ENCODE measurements at regions of chr11 and their contacts with region 1.

Region 1: GRCh38 chr11:27472398-27473016 is at the start of gene LGR4:
- DNase-seq: peak; percentile 90
- ATAC-seq: peak; percentile 95
- H3K4me3 ChIP-seq: peak within 1 kb of the TSS; percentile 53
- H3K27ac ChIP-seq: peak within 1 kb of the TSS; percentile 15; the same call in 1 of the 2 replicates
- H3K4me1 ChIP-seq: peaks cover 7% of the 10 kb centered on the region
- H3K27me3 ChIP-seq: no peaks in the 10 kb centered on the region
- CTCF ChIP-seq: no peak
- POLR2A ChIP-seq: no peak
- RAD21 ChIP-seq: no peak
- total RNA-seq, gene LGR4: 6.8 and 8.1 TPM in 2 replicates

Region 2: GRCh38 chr11:27183672-27184457 is 288.6 kb before region 1 on chr11:
- CTCF ChIA-PET with region 1: no interaction called
- POLR2A ChIA-PET with region 1: interaction called, 10 read pairs
- dilution Hi-C with region 1: loop called (anchors 25 kb)
- in situ Hi-C with region 1: loop called (anchors 5 kb)
- intact Hi-C with region 1: no loop called
- DNase-seq: peak; percentile 72
- ATAC-seq: peak; percentile 56; the same call in 1 of the 2 replicates
- H3K4me3 ChIP-seq: no peak overlapping the region
- H3K27ac ChIP-seq: no peak overlapping the region
- H3K4me1 ChIP-seq: no peaks in the 10 kb centered on the region; the same call in 1 of the 2 replicates
- H3K27me3 ChIP-seq: peaks cover 27% of the 10 kb centered on the region
- CTCF ChIP-seq: peak; percentile 92
- POLR2A ChIP-seq: no peak
- RAD21 ChIP-seq: peak; percentile 96

Region 3: GRCh38 chr11:27362749-27363575 is 109.5 kb before region 1 on chr11 and contains the start of gene CCDC34:
- CTCF ChIA-PET with region 1: no interaction called
- POLR2A ChIA-PET with region 1: no interaction called
- dilution Hi-C with region 1: no loop called
- in situ Hi-C with region 1: loop called (anchors 5 kb)
- intact Hi-C with region 1: loop called (anchors 5 kb)
- DNase-seq: peak; percentile 90
- ATAC-seq: peak; percentile 100
- H3K4me3 ChIP-seq: peak within 1 kb of the TSS; percentile 92
- H3K27ac ChIP-seq: peak within 1 kb of the TSS; percentile 85
- H3K4me1 ChIP-seq: peaks cover 1% of the 10 kb centered on the region; the same call in 1 of the 2 replicates
- H3K27me3 ChIP-seq: no peaks in the 10 kb centered on the region
- CTCF ChIP-seq: no peak
- POLR2A ChIP-seq: no peak
- RAD21 ChIP-seq: no peak
- total RNA-seq, gene CCDC34: 2.5 and 3.9 TPM in 2 replicates

Region 4: DNA sequence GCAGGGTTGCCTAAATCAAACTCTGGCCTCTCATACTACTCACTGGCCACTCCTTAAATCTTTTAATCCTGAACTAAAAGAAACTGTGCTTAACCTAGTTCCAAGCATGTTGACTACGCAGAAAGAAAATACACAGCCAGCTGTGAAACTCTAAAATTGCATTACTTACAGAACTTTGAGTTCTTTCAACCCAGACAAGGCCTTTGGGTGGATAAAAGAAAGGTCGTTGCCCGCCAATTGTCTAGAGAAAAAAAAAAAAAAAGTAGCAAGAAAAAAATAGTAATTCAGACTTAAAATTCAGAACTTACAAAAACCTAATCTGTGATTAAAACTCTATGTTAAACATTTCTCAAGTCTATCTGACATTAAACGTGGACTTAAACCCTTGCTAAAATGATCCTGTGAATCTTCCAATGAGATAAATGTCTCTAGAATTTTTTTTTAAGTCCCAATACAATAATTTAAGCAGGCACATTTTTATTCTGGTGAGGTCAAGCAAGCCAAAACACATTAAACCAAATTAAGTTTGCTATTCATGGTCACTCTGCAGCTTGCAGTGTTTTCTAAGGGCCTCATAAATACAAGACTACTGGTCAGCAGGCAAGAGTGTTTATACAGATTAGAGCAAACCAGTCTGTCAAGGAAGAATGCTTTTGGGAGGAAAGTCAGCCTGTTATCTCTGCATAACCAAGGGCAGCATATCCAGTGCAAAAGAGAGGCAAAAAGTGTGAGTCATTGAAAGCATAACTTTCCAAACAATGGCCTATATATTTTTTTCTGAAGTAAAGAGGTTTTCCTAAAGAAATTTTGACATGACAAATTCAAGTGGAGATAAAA is 80.0 kb before region 1 on chr11:
- CTCF ChIA-PET with region 1: no interaction called
- POLR2A ChIA-PET with region 1: no interaction called
- dilution Hi-C with region 1: no loop called
- in situ Hi-C with region 1: no loop called
- intact Hi-C with region 1: loop called (anchors 5 kb)
- DNase-seq: peak; percentile 90
- ATAC-seq: peak; percentile 82
- H3K4me3 ChIP-seq: no peak overlapping the region
- H3K27ac ChIP-seq: peak overlapping the region; percentile 32; the same call in 1 of the 2 replicates
- H3K4me1 ChIP-seq: peaks cover 19% of the 10 kb centered on the region
- H3K27me3 ChIP-seq: no peaks in the 10 kb centered on the region
- CTCF ChIP-seq: no peak
- POLR2A ChIP-seq: no peak
- RAD21 ChIP-seq: no peak

Region 5: GRCh38 chr11:27910186-27910931 is 437.9 kb after region 1 on chr11:
- CTCF ChIA-PET with region 1: no interaction called
- POLR2A ChIA-PET with region 1: no interaction called
- dilution Hi-C with region 1: no loop called
- in situ Hi-C with region 1: no loop called
- intact Hi-C with region 1: no loop called
- DNase-seq: peak; percentile 84
- ATAC-seq: peak; percentile 73
- H3K4me3 ChIP-seq: no peak overlapping the region
- H3K27ac ChIP-seq: no peak overlapping the region; the same call in 1 of the 2 replicates
- H3K4me1 ChIP-seq: peaks cover 8% of the 10 kb centered on the region
- H3K27me3 ChIP-seq: no peaks in the 10 kb centered on the region
- CTCF ChIP-seq: no peak
- POLR2A ChIP-seq: no peak
- RAD21 ChIP-seq: no peak

Measured in IMR-90 (cell line).